CD4-positive, alpha-beta T cell (primary cell): ENCODE measurements at regions of chr6 and their contacts with region 1.

Region 1: DNA sequence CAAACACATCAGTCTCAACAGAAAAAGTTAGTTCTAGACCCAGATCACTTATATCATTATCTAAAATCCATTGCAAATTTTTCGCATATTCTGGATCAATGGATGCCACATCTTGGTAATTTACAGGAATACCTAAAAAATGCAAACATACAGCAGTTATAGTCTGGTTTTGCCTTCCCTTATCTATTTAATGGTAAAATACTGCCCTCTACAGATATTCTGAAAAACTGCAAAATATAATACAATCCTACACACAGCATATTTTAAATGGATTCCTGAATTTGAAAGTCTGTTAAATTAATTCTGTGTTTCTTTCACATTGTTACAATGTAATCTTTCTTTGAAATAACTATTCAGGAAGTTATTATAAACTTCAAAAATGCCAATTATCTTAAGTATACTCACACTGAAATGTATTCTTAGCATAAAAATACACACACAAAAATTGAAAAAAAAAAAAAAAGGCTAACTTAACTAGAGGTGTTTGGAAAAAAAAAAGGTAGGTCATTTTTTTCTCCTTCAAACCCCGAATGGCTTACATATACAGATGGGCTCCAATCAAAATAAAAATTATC is 88.4 kb downstream of the HACE1 start:
- DNase-seq: peak in 3 of 14 experiments; percentile 34 to 55 (median 38)
- ATAC-seq: peak; percentile 74
- H3K4me3 ChIP-seq: no peak overlapping the region
- H3K4me3 Mint-ChIP-seq: no peak overlapping the region
- H3K27ac ChIP-seq: no peak overlapping the region
- H3K27ac Mint-ChIP-seq: no peak overlapping the region
- H3K4me1 ChIP-seq: no peaks in the 10 kb centered on the region
- H3K4me1 Mint-ChIP-seq: peaks cover 13% of the 10 kb centered on the region
- H3K27me3 ChIP-seq: no peaks in the 10 kb centered on the region
- H3K27me3 Mint-ChIP-seq: no peaks in the 10 kb centered on the region
- CTCF ChIP-seq: peak; percentile 79

Region 2: DNA sequence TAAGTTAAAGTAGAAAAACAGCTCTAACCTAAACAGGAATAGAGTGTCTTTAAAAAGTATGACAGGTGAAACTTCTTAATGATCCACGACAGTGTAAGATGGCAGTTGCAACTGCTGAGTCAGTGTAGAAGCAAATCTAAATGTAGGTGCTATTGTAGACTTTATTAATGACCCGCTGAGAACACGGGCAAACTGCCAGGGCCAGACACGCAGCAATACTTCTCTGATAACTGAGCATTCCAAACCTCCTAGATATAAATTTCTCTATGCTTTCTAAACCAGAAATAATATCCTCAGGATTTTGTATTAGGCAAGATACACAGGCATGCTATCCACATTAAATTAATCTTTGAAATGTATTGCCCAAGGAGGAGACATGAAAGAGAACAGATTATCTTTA is 988.0 kb before region 1 on chr6:
- CTCF ChIA-PET with region 1: no interaction called
- POLR2A ChIA-PET with region 1: no interaction called
- intact Hi-C with region 1: no loop called
- DNase-seq: no peak
- ATAC-seq: no peak
- H3K4me3 ChIP-seq: no peak overlapping the region
- H3K4me3 Mint-ChIP-seq: no peak overlapping the region
- H3K27ac ChIP-seq: no peak overlapping the region
- H3K27ac Mint-ChIP-seq: no peak overlapping the region
- H3K4me1 ChIP-seq: no peaks in the 10 kb centered on the region
- H3K4me1 Mint-ChIP-seq: no peaks in the 10 kb centered on the region
- H3K27me3 ChIP-seq: no peaks in the 10 kb centered on the region
- H3K27me3 Mint-ChIP-seq: no peaks in the 10 kb centered on the region
- CTCF ChIP-seq: no peak

Region 3: DNA sequence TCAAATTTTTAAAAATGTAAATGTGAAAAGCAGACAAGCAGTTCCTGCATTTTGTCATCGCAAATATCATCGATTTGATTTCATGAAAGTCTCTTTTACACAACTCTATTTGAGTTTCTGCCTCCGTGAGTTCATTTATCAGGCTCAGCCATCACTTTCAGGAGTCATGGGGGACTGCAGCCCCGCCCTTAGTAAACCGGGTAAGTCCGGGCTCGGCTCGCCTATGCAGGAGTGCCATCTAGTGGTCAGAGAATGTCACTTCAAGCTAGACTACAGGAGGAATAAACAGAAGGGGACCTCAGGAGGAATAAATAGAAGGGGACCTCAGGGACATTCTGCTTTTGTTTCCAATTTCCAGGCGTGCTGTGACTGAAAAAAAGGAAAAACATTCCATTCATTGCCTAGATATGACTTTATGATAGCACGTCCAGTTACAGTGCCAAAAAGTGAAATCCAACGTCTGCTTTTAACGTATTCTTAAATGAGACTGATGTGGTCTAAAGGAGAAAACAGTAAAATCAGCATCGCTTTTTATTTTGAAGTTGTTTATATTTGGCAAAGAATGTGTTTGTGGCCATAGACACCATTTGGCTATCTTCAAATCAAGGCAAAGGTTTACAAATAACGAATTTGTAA is 245.6 kb before region 1 on chr6:
- CTCF ChIA-PET with region 1: no interaction called
- POLR2A ChIA-PET with region 1: no interaction called
- intact Hi-C with region 1: loop called in 1 of 2 experiments (anchors 10 kb)
- DNase-seq: peak; percentile 29 to 83 (median 43)
- ATAC-seq: peak; percentile 98
- H3K4me3 ChIP-seq: peak overlapping the region; percentile 28
- H3K4me3 Mint-ChIP-seq: peak overlapping the region; percentile 55
- H3K27ac ChIP-seq: no peak overlapping the region
- H3K27ac Mint-ChIP-seq: no peak overlapping the region
- H3K4me1 ChIP-seq: no peaks in the 10 kb centered on the region
- H3K4me1 Mint-ChIP-seq: no peaks in the 10 kb centered on the region
- H3K27me3 ChIP-seq: no peaks in the 10 kb centered on the region
- H3K27me3 Mint-ChIP-seq: peaks cover 11% of the 10 kb centered on the region
- CTCF ChIP-seq: peak; percentile 91

Region 4: GRCh38 chr6:104682722-104683643 is 88.4 kb before region 1 on chr6:
- CTCF ChIA-PET with region 1: interaction called, 3 read pairs
- POLR2A ChIA-PET with region 1: interaction called, 3 read pairs
- intact Hi-C with region 1: loop called (anchors 1 kb)
- DNase-seq: peak; percentile 51 to 83 (median 63)
- ATAC-seq: peak; percentile 55
- H3K4me3 ChIP-seq: no peak overlapping the region
- H3K4me3 Mint-ChIP-seq: no peak overlapping the region
- H3K27ac ChIP-seq: no peak overlapping the region
- H3K27ac Mint-ChIP-seq: no peak overlapping the region
- H3K4me1 ChIP-seq: peaks cover 14% of the 10 kb centered on the region
- H3K4me1 Mint-ChIP-seq: peaks cover 24% of the 10 kb centered on the region
- H3K27me3 ChIP-seq: no peaks in the 10 kb centered on the region
- H3K27me3 Mint-ChIP-seq: no peaks in the 10 kb centered on the region
- CTCF ChIP-seq: peak; percentile 97